PC-3 (cell line): ENCODE measurements at regions of chr9 and their contacts with region 1.

Region 1: DNA sequence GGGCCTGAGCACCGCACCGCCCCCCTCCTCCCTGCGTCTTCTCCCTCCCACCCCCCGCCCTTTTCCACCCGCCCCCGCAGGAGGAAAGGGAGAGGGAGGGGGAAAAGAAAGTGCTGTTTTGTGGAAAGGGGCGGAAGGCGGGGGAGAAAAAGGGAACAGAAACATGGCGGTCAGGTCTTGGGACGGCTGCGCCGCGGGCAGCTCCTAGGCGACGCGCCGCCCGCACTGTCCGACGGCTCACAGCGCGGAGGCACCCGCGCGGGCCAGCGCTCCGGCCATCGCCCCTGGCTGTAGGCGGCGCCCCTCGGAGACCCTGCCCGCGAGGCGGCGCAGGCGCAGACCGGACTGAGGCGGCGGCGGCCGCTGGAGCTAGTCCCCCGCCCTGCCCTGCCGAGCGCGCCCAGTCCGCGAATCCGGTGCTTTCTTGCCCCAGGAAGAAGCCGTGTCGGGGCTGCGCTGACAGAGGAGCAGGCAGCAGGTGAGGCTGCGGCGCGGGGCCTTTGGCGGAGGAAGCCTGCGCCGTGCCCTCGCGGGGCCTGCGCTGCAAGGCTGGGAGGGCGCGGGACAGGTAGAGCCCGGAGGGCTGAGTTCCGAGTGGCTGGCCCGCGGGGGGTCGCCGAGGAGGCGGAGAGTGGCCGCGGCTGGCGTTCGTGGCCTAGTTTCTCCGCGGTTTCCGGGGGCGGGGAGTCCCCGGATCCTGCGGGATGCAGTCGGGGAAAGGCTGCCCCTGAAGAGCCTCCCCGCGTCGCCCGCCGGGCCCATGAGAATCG is at the start of gene DENND4C:
- DNase-seq: peak; percentile 75
- ATAC-seq: peak; percentile 70
- H3K4me3 ChIP-seq: peak within 1 kb of the TSS; percentile 94
- H3K27ac ChIP-seq: peak within 1 kb of the TSS; percentile 70
- H3K4me1 ChIP-seq: peaks cover 9% of the 10 kb centered on the region
- H3K27me3 ChIP-seq: no peaks in the 10 kb centered on the region
- CTCF ChIP-seq: no peak
- total RNA-seq, gene DENND4C: 20.9 and 22.6 TPM in 2 replicates

Region 2: GRCh38 chr9:19048966-19049916 is 181.3 kb before region 1 on chr9 and contains the start of gene RRAGA:
- CTCF ChIA-PET with region 1: no interaction called
- POLR2A ChIA-PET with region 1: no interaction called
- intact Hi-C with region 1: loop called (anchors 2 kb)
- DNase-seq: peak; percentile 92
- ATAC-seq: peak; percentile 83
- H3K4me3 ChIP-seq: peak within 1 kb of the TSS; percentile 89
- H3K27ac ChIP-seq: peak within 1 kb of the TSS; percentile 68
- H3K4me1 ChIP-seq: peaks cover 15% of the 10 kb centered on the region; the same call in 1 of the 2 replicates
- H3K27me3 ChIP-seq: no peaks in the 10 kb centered on the region
- CTCF ChIP-seq: peak; percentile 76
- total RNA-seq, gene RRAGA: 13.0 and 16.8 TPM in 2 replicates

Region 3: GRCh38 chr9:19102631-19103345 is 127.8 kb before region 1 on chr9 and contains the start of gene HAUS6:
- CTCF ChIA-PET with region 1: no interaction called
- POLR2A ChIA-PET with region 1: no interaction called
- intact Hi-C with region 1: loop called (anchors 10 kb)
- DNase-seq: peak; percentile 91
- ATAC-seq: peak; percentile 94
- H3K4me3 ChIP-seq: peak within 1 kb of the TSS; percentile 83
- H3K27ac ChIP-seq: peak within 1 kb of the TSS; percentile 31
- H3K4me1 ChIP-seq: peaks cover 7% of the 10 kb centered on the region; the same call in 1 of the 2 replicates
- H3K27me3 ChIP-seq: no peaks in the 10 kb centered on the region
- CTCF ChIP-seq: no peak
- total RNA-seq, gene HAUS6: 12.3 and 14.4 TPM in 2 replicates

Region 4: GRCh38 chr9:19184144-19184917 is 46.2 kb before region 1 on chr9:
- CTCF ChIA-PET with region 1: no interaction called
- POLR2A ChIA-PET with region 1: interaction called, 5 read pairs
- intact Hi-C with region 1: loop called (anchors 2 kb)
- DNase-seq: peak; percentile 64
- ATAC-seq: peak; percentile 98
- H3K4me3 ChIP-seq: 0 out of 2 replicates have a peak overlapping the region, but pooled peaks have one; percentile 11
- H3K27ac ChIP-seq: peak overlapping the region; percentile 64
- H3K4me1 ChIP-seq: peaks cover 15% of the 10 kb centered on the region
- H3K27me3 ChIP-seq: no peaks in the 10 kb centered on the region
- CTCF ChIP-seq: no peak

Region 5: DNA sequence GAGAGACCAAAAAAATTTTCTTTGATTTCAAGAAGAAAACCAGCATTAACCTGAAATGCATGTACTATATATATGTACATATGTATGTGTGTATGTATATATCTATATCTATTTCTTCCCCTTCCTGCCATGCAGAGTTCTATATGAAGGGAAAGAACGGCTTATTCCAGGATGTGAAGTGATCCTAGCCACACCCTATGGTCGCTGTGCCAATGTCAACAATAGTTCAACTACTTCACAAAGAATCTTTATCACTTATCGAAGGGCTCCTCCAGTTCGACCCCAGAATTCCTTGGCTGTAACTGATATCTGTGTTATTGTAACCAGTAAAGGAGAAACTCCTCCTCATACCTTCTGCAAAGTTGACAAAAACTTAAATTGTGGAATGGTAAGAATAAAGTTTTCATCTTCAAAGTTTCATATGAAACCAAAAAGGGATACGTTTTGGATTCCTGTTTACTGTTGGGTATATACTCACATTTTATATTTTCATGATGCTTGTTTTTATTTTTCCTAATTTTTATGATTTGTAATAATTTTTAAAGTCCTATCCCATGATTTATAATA is 56.2 kb after region 1 on chr9:
- CTCF ChIA-PET with region 1: no interaction called
- POLR2A ChIA-PET with region 1: no interaction called
- intact Hi-C with region 1: loop called (anchors 10 kb)
- DNase-seq: peak; percentile 48
- ATAC-seq: peak; percentile 67
- H3K4me3 ChIP-seq: no peak overlapping the region
- H3K27ac ChIP-seq: no peak overlapping the region
- H3K4me1 ChIP-seq: peaks cover 8% of the 10 kb centered on the region
- H3K27me3 ChIP-seq: no peaks in the 10 kb centered on the region
- CTCF ChIP-seq: no peak

Region 6: DNA sequence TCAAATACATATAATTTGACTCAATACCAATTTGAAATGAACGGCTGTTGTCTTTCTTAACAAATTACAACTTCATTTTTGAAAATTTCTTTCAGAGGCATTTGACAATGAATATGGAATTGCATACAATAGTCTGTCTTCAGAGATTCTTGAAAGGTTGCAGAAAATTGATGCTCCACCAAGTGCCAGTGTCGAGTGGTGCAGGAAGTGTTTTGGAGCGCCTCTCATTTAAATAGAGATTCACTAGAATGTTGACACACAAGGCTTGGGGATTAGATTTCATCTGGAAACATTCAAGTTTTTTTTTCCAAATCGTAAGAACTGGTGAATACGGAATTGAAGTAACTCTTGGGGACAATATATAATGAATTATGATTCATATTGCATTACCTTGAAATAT is 141.4 kb after region 1 on chr9:
- CTCF ChIA-PET with region 1: interaction called, 3 read pairs
- POLR2A ChIA-PET with region 1: no interaction called
- intact Hi-C with region 1: loop called (anchors 2 kb)
- DNase-seq: peak; percentile 23
- ATAC-seq: peak; percentile 68
- H3K4me3 ChIP-seq: no peak overlapping the region
- H3K27ac ChIP-seq: no peak overlapping the region
- H3K4me1 ChIP-seq: no peaks in the 10 kb centered on the region
- H3K27me3 ChIP-seq: no peaks in the 10 kb centered on the region
- CTCF ChIP-seq: 0 out of 2 replicates have a peak, but pooled peaks have one; percentile 20